PC-9 (cell line): ENCODE measurements at regions of chr15 and their contacts with region 1.

Region 1: GRCh38 chr15:85504749-85505676 is 124.6 kb downstream of the AKAP13 start:
- DNase-seq: peak; percentile 11 to 38
- H3K4me3 ChIP-seq: no peak overlapping the region
- H3K27ac ChIP-seq: no peak overlapping the region
- H3K4me1 ChIP-seq: no peaks in the 10 kb centered on the region
- H3K27me3 ChIP-seq: no peaks in the 10 kb centered on the region
- CTCF ChIP-seq: peak; percentile 70

Region 2: DNA sequence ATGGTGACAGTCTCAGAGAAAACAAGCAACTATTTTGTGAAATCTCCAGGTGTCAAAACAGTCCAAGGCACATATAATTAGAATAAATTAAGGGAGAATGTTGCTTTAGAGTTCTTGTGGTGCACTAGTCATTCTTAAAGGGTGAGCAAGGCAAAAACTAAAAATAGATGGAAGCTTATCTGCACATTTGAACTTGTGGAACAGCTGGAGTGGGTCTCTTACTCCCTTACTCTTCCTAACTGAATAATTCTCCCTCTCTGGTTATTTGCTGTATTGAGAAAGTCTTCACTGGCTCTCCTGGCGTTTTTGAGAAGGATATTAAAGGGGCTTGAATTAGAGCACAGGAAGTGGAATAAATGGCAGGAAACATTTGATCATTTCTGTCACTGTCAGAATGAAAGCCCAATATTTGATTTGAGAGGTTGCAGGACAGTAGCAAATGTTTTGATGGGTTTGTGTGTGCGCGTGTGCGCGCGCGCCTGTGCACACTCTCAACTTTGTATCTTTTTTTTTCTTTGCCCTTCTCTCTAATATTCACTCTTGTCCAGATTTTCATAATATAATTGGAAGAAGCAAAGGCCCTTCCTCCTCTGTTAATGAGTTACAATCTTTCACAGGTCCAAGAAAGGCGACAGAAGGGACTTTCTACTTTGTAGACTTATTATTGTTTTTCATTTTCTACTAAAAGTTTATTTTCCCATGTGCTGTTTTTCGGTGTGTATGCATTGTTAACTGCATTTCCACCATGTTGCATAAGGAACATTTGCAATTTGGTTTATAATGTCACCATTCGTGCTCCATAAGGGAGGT is 83.7 kb before region 1 on chr15:
- CTCF ChIA-PET with region 1: no interaction called
- POLR2A ChIA-PET with region 1: interaction called, 10 read pairs
- intact Hi-C with region 1: no loop called
- DNase-seq: no peak
- H3K4me3 ChIP-seq: no peak overlapping the region
- H3K27ac ChIP-seq: no peak overlapping the region
- H3K4me1 ChIP-seq: peaks cover 15% of the 10 kb centered on the region
- H3K27me3 ChIP-seq: no peaks in the 10 kb centered on the region
- CTCF ChIP-seq: no peak

Region 3: DNA sequence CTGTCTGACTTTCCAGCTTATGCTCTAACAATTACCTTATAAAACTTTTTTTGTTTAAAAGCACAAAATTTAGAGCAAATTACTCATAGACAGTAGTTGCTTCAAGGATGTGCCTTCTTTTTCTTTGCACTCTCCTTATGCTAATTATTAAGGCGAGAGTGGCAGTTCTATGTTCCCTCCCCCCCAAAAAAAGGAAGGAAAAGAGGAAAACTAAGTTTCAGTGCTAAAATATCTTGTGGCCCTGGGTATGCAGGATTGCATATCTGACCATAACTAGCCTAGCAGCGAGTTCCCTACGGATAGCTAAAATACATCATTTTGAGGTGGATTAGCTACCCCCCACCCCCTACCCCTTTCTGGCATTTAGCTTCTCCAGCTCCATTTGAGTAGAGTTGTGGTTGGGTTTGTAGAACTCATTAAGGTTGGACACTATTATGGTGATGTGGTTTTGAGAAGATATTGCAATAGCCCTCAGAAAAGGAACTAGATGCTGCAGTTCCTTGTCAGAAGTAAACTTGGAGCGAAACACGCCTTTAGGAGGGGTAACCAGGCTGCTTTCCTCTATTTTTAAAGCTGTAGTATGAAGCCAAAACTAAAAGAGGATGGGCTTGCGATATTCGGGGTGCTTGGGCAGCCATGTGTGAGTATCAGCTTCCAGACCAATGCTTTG is 50.0 kb after region 1 on chr15:
- CTCF ChIA-PET with region 1: interaction called, 11 read pairs
- POLR2A ChIA-PET with region 1: no interaction called
- intact Hi-C with region 1: no loop called
- DNase-seq: no peak
- H3K4me3 ChIP-seq: no peak overlapping the region
- H3K27ac ChIP-seq: no peak overlapping the region
- H3K4me1 ChIP-seq: no peaks in the 10 kb centered on the region
- H3K27me3 ChIP-seq: no peaks in the 10 kb centered on the region
- CTCF ChIP-seq: no peak

Region 4: DNA sequence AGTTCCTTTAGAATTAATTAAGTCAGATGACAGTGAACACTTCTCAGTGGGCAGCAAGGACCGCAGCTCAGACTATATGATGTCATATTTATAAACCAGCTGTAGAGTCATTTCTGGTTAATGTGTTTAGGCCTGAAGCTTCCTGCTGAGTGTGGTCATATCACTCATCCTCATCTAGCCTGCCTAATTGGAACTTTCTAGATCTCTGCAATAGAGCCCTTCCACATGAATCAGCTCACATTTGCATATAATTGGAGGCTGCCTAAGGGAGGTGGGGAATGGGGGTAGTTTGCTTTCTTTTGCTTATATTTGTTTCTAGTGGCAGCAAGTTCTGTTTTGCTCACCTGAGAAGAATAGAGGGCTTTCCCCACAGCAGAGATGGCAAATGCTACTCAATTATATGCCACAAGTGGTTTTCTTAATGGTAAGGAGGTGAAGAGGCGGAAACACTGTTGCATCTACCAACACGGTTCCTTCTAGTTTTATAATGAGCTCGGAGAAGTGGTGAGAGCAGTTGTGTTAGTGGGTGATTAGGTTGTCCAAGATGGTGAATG is 141.6 kb after region 1 on chr15:
- CTCF ChIA-PET with region 1: no interaction called
- POLR2A ChIA-PET with region 1: no interaction called
- intact Hi-C with region 1: no loop called
- DNase-seq: no peak
- H3K4me3 ChIP-seq: no peak overlapping the region
- H3K27ac ChIP-seq: no peak overlapping the region
- H3K4me1 ChIP-seq: no peaks in the 10 kb centered on the region
- H3K27me3 ChIP-seq: no peaks in the 10 kb centered on the region
- CTCF ChIP-seq: no peak

Region 5: GRCh38 chr15:85710340-85710842 is 205.4 kb after region 1 on chr15:
- CTCF ChIA-PET with region 1: no interaction called
- POLR2A ChIA-PET with region 1: no interaction called
- intact Hi-C with region 1: no loop called
- DNase-seq: no peak
- H3K4me3 ChIP-seq: no peak overlapping the region
- H3K27ac ChIP-seq: no peak overlapping the region
- H3K4me1 ChIP-seq: no peaks in the 10 kb centered on the region
- H3K27me3 ChIP-seq: no peaks in the 10 kb centered on the region
- CTCF ChIP-seq: no peak